Aorta (tissue), 5 donors: ENCODE measurements at regions of chr22 and their contacts with region 1.

Region 1: DNA sequence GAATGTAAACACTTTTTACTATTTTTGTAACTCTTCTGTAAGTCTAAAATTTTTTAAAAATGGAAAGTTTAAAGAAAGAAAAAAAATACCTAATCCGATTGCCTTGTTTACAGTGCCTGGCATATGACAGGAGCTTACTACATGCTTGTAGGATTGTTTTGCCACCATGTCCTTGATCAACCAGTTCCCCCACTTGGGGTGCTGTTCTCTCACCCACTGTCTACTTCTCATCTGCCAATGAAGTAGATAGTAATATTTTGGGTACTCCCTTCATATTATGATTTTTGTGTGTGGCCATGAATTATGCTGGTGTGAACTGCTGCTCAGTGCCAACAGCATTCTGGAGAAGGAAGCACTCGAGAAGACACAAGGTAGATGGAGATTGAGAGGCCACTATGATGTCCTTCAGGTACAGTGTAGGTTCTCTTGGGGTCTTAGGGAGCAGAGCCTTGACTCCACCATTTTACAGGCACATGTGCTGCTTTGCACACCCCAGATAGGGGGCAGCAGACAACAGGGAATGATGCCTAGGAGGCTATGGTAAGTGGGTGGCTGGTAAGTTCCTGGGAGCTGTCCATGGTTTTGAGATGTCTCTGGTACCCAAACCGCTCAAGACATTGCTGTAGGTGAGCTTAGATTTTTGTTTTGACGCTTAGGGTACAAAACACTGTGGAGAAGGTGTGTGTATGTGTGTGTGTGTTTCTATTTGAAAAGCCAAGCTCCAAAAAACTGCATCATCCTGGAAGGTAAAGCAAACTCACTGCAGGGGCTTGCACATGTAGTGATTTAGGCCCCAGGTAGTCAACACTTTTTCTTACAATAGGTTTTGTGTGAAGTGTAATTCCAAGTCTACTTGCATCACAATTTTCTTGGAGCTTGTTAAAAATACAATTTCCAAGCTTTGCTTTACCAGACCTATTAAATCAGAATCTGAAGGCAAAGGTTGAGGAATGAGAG is 494.5 kb upstream of the LARGE1 start:
- DNase-seq: no peak
- ATAC-seq: no peak
- H3K4me3 ChIP-seq: no peak overlapping the region
- H3K27ac ChIP-seq: no peak overlapping the region
- H3K4me1 ChIP-seq: no peaks in the 10 kb centered on the region
- H3K27me3 ChIP-seq: peaks cover 0 to 4% of the 10 kb centered on the region in 2 donors

Region 2: GRCh38 chr22:34077380-34077779 is 337.4 kb before region 1 on chr22:
- intact Hi-C with region 1: loop called in 1 of 2 experiments (anchors 5 kb)
- DNase-seq: no peak
- ATAC-seq: no peak
- H3K4me3 ChIP-seq: no peak overlapping the region
- H3K27ac ChIP-seq: no peak overlapping the region
- H3K4me1 ChIP-seq: no peaks in the 10 kb centered on the region
- H3K27me3 ChIP-seq: peaks cover 0 to 3% of the 10 kb centered on the region in 2 donors

Region 3: DNA sequence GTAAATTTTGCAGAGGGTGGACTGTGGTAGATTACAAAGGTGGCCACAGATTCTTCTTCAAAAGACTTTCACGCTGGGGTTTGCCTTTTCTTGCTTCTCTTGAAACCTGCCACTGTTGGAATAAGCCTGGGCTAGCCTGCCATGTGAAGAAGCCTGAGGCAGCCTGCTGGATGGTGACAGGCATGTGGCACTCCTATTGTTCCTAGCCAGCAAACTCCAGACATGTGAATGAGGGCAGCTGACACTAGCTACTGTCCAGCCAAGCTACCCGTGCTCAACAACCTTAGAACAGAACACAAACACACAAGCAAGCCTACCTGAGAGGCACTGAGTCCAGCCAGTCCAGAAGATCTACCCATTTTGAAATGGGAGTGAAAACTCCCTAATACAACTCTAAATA is 171.7 kb before region 1 on chr22:
- intact Hi-C with region 1: no loop called
- DNase-seq: no peak
- ATAC-seq: no peak
- H3K4me3 ChIP-seq: no peak overlapping the region
- H3K27ac ChIP-seq: no peak overlapping the region
- H3K4me1 ChIP-seq: no peaks in the 10 kb centered on the region
- H3K27me3 ChIP-seq: no peaks in the 10 kb centered on the region